ENCODE measurements at regions of chr15 and their contacts with region 1.

Region 1: DNA sequence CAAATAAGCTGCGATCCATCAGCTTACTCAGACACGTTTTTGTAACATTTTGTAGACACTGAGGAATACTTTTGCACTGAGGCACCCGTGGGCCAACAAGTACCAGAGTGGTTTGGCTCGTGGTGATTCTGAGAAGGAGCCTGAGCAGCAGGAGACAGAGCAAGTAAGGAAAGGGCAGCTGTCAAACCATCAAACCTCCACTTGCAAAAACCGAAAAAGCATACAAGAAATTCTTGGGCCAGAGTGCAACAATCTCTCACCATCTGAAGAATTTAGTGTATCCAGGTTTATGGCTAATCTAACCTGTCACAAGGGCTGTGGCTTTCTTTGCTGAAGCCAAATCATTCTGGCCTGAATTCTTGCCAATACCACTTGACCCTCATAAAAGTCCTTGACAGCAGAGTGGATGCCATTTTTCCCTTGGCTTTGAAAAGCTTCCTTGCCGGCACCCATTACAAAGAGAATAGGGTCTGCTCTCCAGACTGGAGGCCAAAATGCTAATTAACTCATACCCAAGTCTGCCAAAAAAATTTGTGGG is 56.7 kb downstream of the MYO1E start:
- DNase-seq: no peak
- H3K4me3 ChIP-seq: no peak overlapping the region
- H3K27ac ChIP-seq: no peak overlapping the region
- H3K4me1 ChIP-seq: no peaks in the 10 kb centered on the region
- H3K27me3 ChIP-seq: no peaks in the 10 kb centered on the region
- CTCF ChIP-seq: no peak

Region 2: GRCh38 chr15:59191855-59192237 is 124.1 kb before region 1 on chr15:
- CTCF ChIA-PET with region 1: no interaction called
- POLR2A ChIA-PET with region 1: no interaction called
- intact Hi-C with region 1: no loop called
- DNase-seq: peak; percentile 16
- H3K4me3 ChIP-seq: no peak overlapping the region
- H3K27ac ChIP-seq: no peak overlapping the region
- H3K4me1 ChIP-seq: no peaks in the 10 kb centered on the region
- H3K27me3 ChIP-seq: no peaks in the 10 kb centered on the region
- CTCF ChIP-seq: no peak

Region 3: GRCh38 chr15:59360305-59360704 is 44.3 kb after region 1 on chr15:
- CTCF ChIA-PET with region 1: interaction called, 15 read pairs
- POLR2A ChIA-PET with region 1: no interaction called
- intact Hi-C with region 1: no loop called
- DNase-seq: no peak
- H3K4me3 ChIP-seq: no peak overlapping the region
- H3K27ac ChIP-seq: no peak overlapping the region
- H3K4me1 ChIP-seq: no peaks in the 10 kb centered on the region
- H3K27me3 ChIP-seq: no peaks in the 10 kb centered on the region
- CTCF ChIP-seq: peak; percentile 21; the same call in 1 of the 2 replicates

Region 4: DNA sequence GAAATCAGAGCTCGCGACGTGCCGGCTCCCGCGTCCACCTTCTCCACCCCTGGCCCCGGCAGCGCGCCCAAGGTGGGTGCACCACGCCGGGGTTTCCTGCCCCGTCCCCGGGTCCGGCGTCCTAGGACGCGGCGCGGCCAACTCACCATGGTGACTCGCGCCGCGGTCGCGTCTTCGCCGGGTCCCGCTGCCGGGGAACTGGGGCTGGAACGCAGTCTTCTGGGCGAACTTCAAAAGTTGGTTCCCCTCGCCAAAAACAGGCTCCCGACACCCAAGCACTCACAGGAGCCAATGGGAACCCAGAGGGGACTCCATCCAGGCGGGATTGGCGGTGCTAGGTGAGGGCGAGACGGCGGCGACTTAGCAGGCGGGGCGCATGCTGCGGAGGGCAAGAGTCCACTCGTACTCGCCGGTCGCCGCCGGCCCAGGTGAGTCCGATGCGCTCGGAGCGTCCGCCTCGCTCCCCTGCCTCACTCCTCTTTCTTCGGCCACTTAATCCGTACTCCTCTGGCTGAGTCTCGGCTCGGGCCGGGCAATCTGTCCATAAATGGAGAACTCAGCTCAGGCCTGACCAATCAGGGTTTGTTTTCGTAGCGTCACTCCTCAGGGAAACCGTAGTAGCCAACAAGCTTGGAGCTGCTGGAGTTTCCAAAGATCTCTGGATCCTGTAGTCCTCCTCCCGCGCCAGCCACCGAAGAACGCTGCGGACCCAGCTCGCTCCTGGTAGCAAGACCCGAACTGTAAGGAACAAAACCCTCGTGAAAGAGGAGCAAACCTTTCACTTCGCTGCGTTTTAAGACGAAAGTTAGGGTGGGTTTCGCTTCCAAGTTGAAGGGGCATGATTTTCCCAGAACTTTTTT is 56.6 kb after region 1 on chr15 and contains the start of gene MYO1E:
- CTCF ChIA-PET with region 1: no interaction called
- POLR2A ChIA-PET with region 1: no interaction called
- intact Hi-C with region 1: no loop called
- DNase-seq: peak; percentile 95
- H3K4me3 ChIP-seq: peak within 1 kb of the TSS; percentile 64
- H3K27ac ChIP-seq: peak within 1 kb of the TSS; percentile 76
- H3K4me1 ChIP-seq: no peaks in the 10 kb centered on the region
- H3K27me3 ChIP-seq: peaks cover 22% of the 10 kb centered on the region
- CTCF ChIP-seq: no peak
- total RNA-seq, gene MYO1E: 7.9 and 10.6 TPM in 2 replicates

Measured in A673 (cell line).